Naive thymus-derived CD4-positive, alpha-beta T cell (primary cell): ENCODE measurements at regions of chr15 and their contacts with region 1.

Region 1: GRCh38 chr15:90184786-90185569 is 16.2 kb upstream of the SEMA4B start:
- DNase-seq: peak; percentile 42 to 63 (median 60)
- ATAC-seq: peak; percentile 85
- H3K4me3 ChIP-seq: peak overlapping the region; percentile 56
- H3K4me3 Mint-ChIP-seq: peak overlapping the region; percentile 74 to 94 (median 83)
- H3K27ac ChIP-seq: peak overlapping the region; percentile 48
- H3K27ac Mint-ChIP-seq: peak overlapping the region in 8 of 9 donors; percentile 5 to 89 (median 50)
- H3K4me1 ChIP-seq: peaks cover 6% of the 10 kb centered on the region in 2 donors
- H3K4me1 Mint-ChIP-seq: peaks cover 6 to 30% (median 14%) of the 10 kb centered on the region in 7 donors
- H3K27me3 ChIP-seq: no peaks in the 10 kb centered on the region
- H3K27me3 Mint-ChIP-seq: peaks cover 0 to 8% (median 0%) of the 10 kb centered on the region in 5 donors

Region 2: DNA sequence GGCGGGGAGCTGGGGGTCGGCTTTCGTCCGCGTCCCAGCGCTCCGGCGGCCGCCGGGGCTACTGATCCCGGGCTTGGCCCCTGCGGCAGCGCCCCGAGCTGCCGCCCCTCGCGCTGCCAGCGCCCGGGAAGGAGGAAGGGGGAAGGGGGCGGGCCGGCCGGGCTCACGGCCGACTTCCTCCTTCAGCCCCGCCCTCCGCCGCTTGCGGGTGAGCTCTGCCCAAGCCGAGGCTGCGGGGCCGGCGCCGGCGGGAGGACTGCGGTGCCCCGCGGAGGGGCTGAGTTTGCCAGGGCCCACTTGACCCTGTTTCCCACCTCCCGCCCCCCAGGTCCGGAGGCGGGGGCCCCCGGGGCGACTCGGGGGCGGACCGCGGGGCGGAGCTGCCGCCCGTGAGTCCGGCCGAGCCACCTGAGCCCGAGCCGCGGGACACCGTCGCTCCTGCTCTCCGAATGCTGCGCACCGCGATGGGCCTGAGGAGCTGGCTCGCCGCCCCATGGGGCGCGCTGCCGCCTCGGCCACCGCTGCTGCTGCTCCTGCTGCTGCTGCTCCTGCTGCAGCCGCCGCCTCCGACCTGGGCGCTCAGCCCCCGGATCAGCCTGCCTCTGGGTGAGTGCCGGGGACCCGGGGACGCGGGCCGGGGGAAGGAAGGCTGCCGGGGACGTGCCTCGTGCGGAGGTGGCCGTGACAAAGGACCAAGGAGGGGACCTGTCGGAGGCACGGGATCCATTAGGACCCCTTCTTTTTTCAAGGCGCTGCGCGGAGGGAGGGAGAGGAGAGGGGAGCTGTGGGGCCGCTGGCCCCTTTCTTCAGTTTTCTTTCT is 16.4 kb after region 1 on chr15 and contains the start of gene SEMA4B:
- CTCF ChIA-PET with region 1: interaction called, 3 read pairs
- POLR2A ChIA-PET with region 1: interaction called, 16 read pairs
- intact Hi-C with region 1: loop called (anchors 1 kb)
- DNase-seq: peak; percentile 56 to 81 (median 70)
- ATAC-seq: peak; percentile 92
- H3K4me3 ChIP-seq: peak within 1 kb of the TSS; percentile 67
- H3K4me3 Mint-ChIP-seq: peak within 1 kb of the TSS; percentile 84 to 96 (median 89)
- H3K27ac ChIP-seq: peak within 1 kb of the TSS; percentile 85
- H3K27ac Mint-ChIP-seq: peak within 1 kb of the TSS; percentile 66 to 90 (median 82)
- H3K4me1 ChIP-seq: peaks cover 11 to 23% of the 10 kb centered on the region in 2 donors
- H3K4me1 Mint-ChIP-seq: peaks cover 21 to 36% (median 25%) of the 10 kb centered on the region in 7 donors
- H3K27me3 ChIP-seq: no peaks in the 10 kb centered on the region
- H3K27me3 Mint-ChIP-seq: peaks cover 0 to 3% (median 0%) of the 10 kb centered on the region in 5 donors
- total RNA-seq, gene SEMA4B: 15.9 to 31.0 (median 20.7) TPM